Aorta (tissue), 5 donors: ENCODE measurements at regions of chr9 and their contacts with region 1.

Region 1: DNA sequence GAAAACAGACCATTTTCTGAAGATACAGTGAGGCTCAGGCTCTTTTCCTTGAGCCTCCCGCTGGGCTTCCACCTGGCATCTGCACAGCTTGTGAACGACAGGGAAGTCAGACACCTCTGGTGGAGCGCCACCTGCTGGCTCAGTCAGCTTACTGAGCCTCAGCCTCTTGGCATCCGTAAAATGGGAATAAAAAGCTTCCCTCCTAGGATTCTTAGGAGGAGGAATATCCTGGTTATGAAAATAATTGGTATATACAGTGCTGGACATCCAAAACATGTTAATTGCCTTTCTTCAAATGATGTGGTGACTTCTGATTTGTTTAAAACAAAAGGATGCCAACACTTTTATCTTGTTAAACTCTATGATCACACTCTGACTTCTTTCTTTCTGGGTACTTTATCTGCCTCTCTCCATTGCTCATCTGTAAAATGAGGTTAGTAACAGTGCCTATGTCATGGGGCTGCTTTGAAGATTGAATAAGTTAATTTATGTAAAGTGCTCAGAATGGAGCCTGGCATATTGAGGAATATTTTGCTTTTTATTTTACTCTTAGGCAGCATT is 67.5 kb downstream of the MAMDC2 start:
- DNase-seq: peak; percentile 89 to 95
- ATAC-seq: peak; percentile 84
- H3K4me3 ChIP-seq: no peak overlapping the region
- H3K27ac ChIP-seq: no peak overlapping the region
- H3K4me1 ChIP-seq: no peaks in the 10 kb centered on the region
- H3K27me3 ChIP-seq: no peaks in the 10 kb centered on the region

Region 2: GRCh38 chr9:69932901-69933300 is 178.2 kb before region 1 on chr9:
- intact Hi-C with region 1: no loop called
- DNase-seq: no peak
- ATAC-seq: no peak
- H3K4me3 ChIP-seq: no peak overlapping the region
- H3K27ac ChIP-seq: no peak overlapping the region
- H3K4me1 ChIP-seq: no peaks in the 10 kb centered on the region
- H3K27me3 ChIP-seq: no peaks in the 10 kb centered on the region

Region 3: GRCh38 chr9:70043689-70044489 is 67.2 kb before region 1 on chr9 and contains the start of gene MAMDC2:
- intact Hi-C with region 1: loop called in 1 of 2 experiments (anchors 5 kb)
- DNase-seq: peak; percentile 66 to 81
- ATAC-seq: peak; percentile 76
- H3K4me3 ChIP-seq: peak within 1 kb of the TSS; percentile 42 to 55
- H3K27ac ChIP-seq: peak within 1 kb of the TSS in 1 of 2 donors; percentile 9
- H3K4me1 ChIP-seq: peaks cover 0 to 2% of the 10 kb centered on the region in 2 donors
- H3K27me3 ChIP-seq: no peaks in the 10 kb centered on the region
- total RNA-seq, gene MAMDC2: 5.9 to 14.6 TPM

Region 4: GRCh38 chr9:70229579-70229978 is 118.5 kb after region 1 on chr9:
- intact Hi-C with region 1: loop called in 1 of 2 experiments (anchors 5 kb)
- DNase-seq: no peak
- ATAC-seq: peak; percentile 38
- H3K4me3 ChIP-seq: no peak overlapping the region
- H3K27ac ChIP-seq: no peak overlapping the region
- H3K4me1 ChIP-seq: no peaks in the 10 kb centered on the region
- H3K27me3 ChIP-seq: no peaks in the 10 kb centered on the region